MCF 10A (cell line): ENCODE measurements at regions of chr17 and their contacts with region 1.

Region 1: DNA sequence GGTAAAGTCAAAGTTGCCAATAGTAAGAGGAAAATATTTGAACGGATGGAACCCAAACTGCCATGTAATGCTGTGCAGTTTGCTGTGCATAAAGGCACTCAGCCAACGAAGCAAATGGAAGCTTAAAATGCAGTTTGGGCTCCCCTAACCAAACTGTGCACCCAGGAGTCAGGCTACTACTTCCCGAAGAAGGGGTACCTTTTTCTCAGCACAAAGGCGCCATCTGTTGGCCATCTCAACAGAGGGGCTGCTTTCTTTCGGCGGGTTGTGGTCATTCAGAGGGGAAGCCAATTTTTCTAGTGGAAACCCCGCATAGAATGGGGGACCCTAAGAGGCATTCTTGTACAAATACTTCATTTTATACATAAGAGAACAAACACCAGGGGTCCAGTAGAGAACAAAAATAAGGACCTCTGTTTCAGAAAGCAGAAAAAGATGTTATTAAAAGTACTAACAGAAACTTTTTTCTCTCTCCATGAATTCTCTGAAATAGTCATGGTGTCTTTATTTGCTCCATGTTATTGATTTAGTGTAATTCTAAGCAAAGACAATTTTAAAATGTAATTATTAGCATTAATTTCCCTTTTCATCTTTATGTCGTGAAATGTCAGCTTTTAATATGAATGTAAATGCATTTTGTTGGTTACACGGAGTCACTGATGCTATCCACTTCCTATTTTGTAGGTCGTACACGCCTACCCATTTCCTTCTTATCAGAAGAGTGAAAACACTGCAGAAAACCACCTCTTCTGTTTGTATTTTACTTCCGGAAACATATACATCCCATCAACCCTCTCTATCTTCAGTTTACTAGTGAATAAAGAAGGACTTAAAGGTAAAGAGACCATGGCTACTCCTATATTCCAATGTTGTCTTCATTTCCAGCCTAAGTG is 453.3 kb downstream of the KCNJ2 start:
- DNase-seq: peak; percentile 75
- H3K4me3 Mint-ChIP-seq: no peak overlapping the region
- H3K27ac Mint-ChIP-seq: no peak overlapping the region
- H3K4me1 Mint-ChIP-seq: peaks cover 6% of the 10 kb centered on the region
- H3K27me3 Mint-ChIP-seq: no peaks in the 10 kb centered on the region
- CTCF ChIP-seq: peak; percentile 68

Region 2: GRCh38 chr17:69335058-69335457 is 1287.6 kb before region 1 on chr17:
- CTCF ChIA-PET with region 1: interaction called, 3 read pairs
- POLR2A ChIA-PET with region 1: no interaction called
- intact Hi-C with region 1: loop called (anchors 10 kb)
- DNase-seq: peak; percentile 44
- H3K4me3 Mint-ChIP-seq: no peak overlapping the region
- H3K27ac Mint-ChIP-seq: no peak overlapping the region
- H3K4me1 Mint-ChIP-seq: no peaks in the 10 kb centered on the region
- H3K27me3 Mint-ChIP-seq: no peaks in the 10 kb centered on the region
- CTCF ChIP-seq: peak; percentile 48

Region 3: DNA sequence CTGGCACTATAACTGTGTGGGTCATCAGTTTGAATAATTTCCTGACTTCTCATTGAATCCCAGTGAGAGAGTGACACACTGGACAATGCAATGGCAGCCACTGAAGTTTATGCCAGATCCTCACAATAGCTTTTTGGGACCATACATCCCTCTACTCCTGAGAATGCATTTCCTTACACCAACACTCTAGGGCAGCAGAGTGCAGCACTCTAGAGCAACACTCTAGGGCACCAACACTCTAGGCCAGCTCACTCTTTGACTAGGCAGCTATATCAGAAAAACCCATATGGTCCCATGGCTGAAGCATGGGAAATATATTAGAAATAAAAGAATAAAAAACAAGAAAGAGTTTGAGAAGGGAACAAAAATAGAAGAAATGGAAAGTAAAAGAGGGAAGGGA is 898.9 kb before region 1 on chr17:
- CTCF ChIA-PET with region 1: no interaction called
- POLR2A ChIA-PET with region 1: no interaction called
- intact Hi-C with region 1: loop called (anchors 2 kb)
- DNase-seq: peak; percentile 36
- H3K4me3 Mint-ChIP-seq: no peak overlapping the region
- H3K27ac Mint-ChIP-seq: peak overlapping the region; percentile 64
- H3K4me1 Mint-ChIP-seq: peaks cover 18% of the 10 kb centered on the region
- H3K27me3 Mint-ChIP-seq: no peaks in the 10 kb centered on the region
- CTCF ChIP-seq: peak; percentile 24

Region 4: GRCh38 chr17:70144260-70144846 is 478.3 kb before region 1 on chr17:
- CTCF ChIA-PET with region 1: interaction called, 4 read pairs
- POLR2A ChIA-PET with region 1: no interaction called
- intact Hi-C with region 1: loop called (anchors 1 kb)
- DNase-seq: peak; percentile 49
- H3K4me3 Mint-ChIP-seq: no peak overlapping the region
- H3K27ac Mint-ChIP-seq: peak overlapping the region; percentile 33
- H3K4me1 Mint-ChIP-seq: no peaks in the 10 kb centered on the region
- H3K27me3 Mint-ChIP-seq: no peaks in the 10 kb centered on the region
- CTCF ChIP-seq: peak; percentile 44

Region 5: DNA sequence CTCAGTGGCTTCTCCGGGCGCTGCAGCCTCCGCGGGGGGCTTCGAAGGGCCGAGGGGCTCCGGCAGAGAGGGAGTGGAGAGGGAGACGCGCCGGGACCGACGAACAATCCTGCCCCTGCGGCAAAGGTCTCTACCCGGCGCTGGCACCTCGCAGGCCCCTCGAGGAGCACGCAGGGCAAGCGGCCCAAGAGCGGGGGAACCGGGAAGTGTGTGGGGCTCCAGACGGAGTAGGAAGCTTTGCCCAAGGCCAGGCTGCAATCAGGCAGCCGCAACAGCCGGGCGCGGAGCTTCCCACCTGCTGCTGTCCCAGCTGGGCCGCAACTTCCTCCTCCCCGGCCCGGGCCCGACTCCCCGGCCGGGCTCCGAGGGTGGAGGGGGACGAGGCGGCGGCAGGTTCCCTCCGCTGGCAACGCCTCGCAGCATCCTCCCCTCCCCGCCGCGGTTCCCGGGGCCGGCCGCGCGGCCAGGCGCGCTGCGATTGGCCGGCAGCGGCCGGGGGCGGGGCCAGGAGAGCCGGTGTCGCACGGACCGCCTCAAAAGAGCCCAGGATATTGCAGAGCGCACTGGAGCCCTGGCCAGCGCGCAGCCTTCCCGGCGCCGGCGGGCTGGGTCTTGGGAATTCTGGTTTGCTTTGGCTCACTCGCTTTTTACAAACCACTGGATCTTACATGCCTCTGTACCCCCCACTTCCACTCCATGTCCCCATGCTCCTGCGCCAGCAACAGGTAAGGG is 453.5 kb before region 1 on chr17 and contains the start of gene KCNJ2:
- CTCF ChIA-PET with region 1: interaction called, 3 read pairs
- POLR2A ChIA-PET with region 1: no interaction called
- intact Hi-C with region 1: loop called (anchors 5 kb)
- DNase-seq: peak; percentile 76
- H3K4me3 Mint-ChIP-seq: peak within 1 kb of the TSS; percentile 76
- H3K27ac Mint-ChIP-seq: peak within 1 kb of the TSS; percentile 10
- H3K4me1 Mint-ChIP-seq: peaks cover 34% of the 10 kb centered on the region
- H3K27me3 Mint-ChIP-seq: no peaks in the 10 kb centered on the region
- CTCF ChIP-seq: no peak
- total RNA-seq, gene KCNJ2: 0.19 and 0.54 TPM in 2 replicates

Region 6: GRCh38 chr17:70655176-70655958 is 32.8 kb after region 1 on chr17:
- CTCF ChIA-PET with region 1: no interaction called
- POLR2A ChIA-PET with region 1: no interaction called
- intact Hi-C with region 1: no loop called
- DNase-seq: no peak
- H3K4me3 Mint-ChIP-seq: no peak overlapping the region
- H3K27ac Mint-ChIP-seq: no peak overlapping the region
- H3K4me1 Mint-ChIP-seq: no peaks in the 10 kb centered on the region
- H3K27me3 Mint-ChIP-seq: peaks cover 53% of the 10 kb centered on the region
- CTCF ChIP-seq: no peak

Region 7: DNA sequence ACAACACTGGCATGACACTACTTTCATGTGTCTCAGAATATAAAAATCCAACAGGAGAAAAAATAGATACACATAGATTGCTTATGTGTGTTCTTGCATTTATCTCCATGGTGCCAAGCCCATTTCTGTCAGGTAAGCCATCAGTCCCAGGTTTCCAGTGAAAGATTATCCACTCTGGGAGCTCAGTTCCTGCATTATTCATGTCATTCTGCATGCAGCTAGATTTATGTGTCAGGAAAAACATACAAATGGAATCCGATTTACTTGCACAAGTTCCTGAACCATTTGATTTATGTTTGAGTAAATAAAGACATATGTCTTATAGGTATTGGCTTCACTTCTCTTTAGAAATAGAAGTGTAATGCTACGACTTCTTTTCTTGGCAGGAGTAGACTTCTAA is 116.5 kb after region 1 on chr17:
- CTCF ChIA-PET with region 1: no interaction called
- POLR2A ChIA-PET with region 1: no interaction called
- intact Hi-C with region 1: no loop called
- DNase-seq: no peak
- H3K4me3 Mint-ChIP-seq: no peak overlapping the region
- H3K27ac Mint-ChIP-seq: no peak overlapping the region
- H3K4me1 Mint-ChIP-seq: no peaks in the 10 kb centered on the region
- H3K27me3 Mint-ChIP-seq: peaks cover 82% of the 10 kb centered on the region
- CTCF ChIP-seq: no peak